ENCODE measurements at regions of chr7 and their contacts with region 1.

Region 1: GRCh38 chr7:140175221-140176121 is 1.3 kb downstream of the KDM7A start:
- DNase-seq: peak; percentile 98
- ATAC-seq: peak; percentile 68
- H3K4me3 Mint-ChIP-seq: peak overlapping the region; percentile 79
- H3K27ac Mint-ChIP-seq: peak overlapping the region; percentile 85
- H3K4me1 Mint-ChIP-seq: peaks cover 43% of the 10 kb centered on the region
- H3K27me3 Mint-ChIP-seq: peaks cover 1% of the 10 kb centered on the region
- CTCF ChIP-seq: peak; percentile 72

Region 2: DNA sequence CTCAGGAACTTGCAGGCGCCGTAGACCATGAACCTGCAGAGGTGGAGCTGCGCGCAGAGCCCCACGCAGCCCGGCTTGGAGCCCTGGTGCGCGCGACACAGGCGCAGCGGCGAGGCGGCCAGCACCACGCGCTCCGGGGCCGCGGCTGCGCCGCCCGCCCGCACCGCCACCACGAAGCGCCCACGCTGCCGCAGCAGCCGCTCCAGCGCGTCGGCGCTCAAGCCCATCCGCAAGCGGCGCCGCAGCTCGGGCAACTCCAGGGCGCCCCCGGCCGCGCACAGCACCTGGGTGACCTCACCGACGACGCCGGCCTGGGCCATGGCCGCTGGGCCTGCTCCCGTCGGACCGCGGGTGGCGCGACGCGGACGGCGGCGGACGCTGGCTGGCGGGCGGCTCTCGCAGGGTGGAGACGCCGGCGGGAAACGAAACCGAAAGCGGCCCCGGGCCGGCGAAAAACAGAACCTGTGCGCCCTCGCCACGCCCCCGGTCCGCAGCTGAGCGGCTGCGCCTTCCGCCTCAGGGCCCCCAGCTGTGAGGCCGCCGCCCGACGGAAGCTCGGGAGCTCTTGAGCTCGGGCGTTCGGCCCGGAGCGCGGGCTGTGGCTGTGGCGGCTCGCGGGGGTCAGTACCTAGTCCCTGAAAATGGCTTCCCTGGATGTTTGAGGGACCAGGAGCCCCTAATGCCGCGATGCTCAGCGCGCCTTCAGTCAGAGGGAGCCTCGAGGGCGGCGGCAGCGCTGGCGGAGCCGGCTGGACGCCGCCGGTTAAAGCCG is 112.8 kb before region 1 on chr7 and contains the start of gene PARP12:
- CTCF ChIA-PET with region 1: no interaction called
- POLR2A ChIA-PET with region 1: interaction called, 3 read pairs
- intact Hi-C with region 1: loop called (anchors 5 kb)
- DNase-seq: peak; percentile 89
- ATAC-seq: peak; percentile 81
- H3K4me3 Mint-ChIP-seq: peak within 1 kb of the TSS; percentile 83
- H3K27ac Mint-ChIP-seq: peak within 1 kb of the TSS; percentile 81
- H3K4me1 Mint-ChIP-seq: peaks cover 36% of the 10 kb centered on the region
- H3K27me3 Mint-ChIP-seq: no peaks in the 10 kb centered on the region
- CTCF ChIP-seq: no peak
- total RNA-seq, gene PARP12: 29.5 to 29.9 TPM

Region 3: GRCh38 chr7:140230861-140231770 is 55.6 kb after region 1 on chr7:
- CTCF ChIA-PET with region 1: interaction called, 10 read pairs
- POLR2A ChIA-PET with region 1: interaction called, 48 read pairs
- intact Hi-C with region 1: loop called (anchors 2 kb)
- DNase-seq: peak; percentile 87
- ATAC-seq: peak; percentile 62
- H3K4me3 Mint-ChIP-seq: peak overlapping the region; percentile 83
- H3K27ac Mint-ChIP-seq: peak overlapping the region; percentile 98
- H3K4me1 Mint-ChIP-seq: peaks cover 30% of the 10 kb centered on the region
- H3K27me3 Mint-ChIP-seq: no peaks in the 10 kb centered on the region
- CTCF ChIP-seq: no peak

Region 4: GRCh38 chr7:140304191-140304799 is 128.8 kb after region 1 on chr7:
- CTCF ChIA-PET with region 1: interaction called, 13 read pairs
- POLR2A ChIA-PET with region 1: interaction called, 4 read pairs
- intact Hi-C with region 1: loop called (anchors 2 kb)
- DNase-seq: peak; percentile 55
- ATAC-seq: peak; percentile 95
- H3K4me3 Mint-ChIP-seq: peak overlapping the region; percentile 35
- H3K27ac Mint-ChIP-seq: peak overlapping the region; percentile 92
- H3K4me1 Mint-ChIP-seq: peaks cover 9% of the 10 kb centered on the region
- H3K27me3 Mint-ChIP-seq: no peaks in the 10 kb centered on the region
- CTCF ChIP-seq: peak; percentile 62

Region 5: GRCh38 chr7:140316165-140316661 is 140.7 kb after region 1 on chr7:
- CTCF ChIA-PET with region 1: no interaction called
- POLR2A ChIA-PET with region 1: no interaction called
- intact Hi-C with region 1: loop called (anchors 5 kb)
- DNase-seq: peak; percentile 36
- ATAC-seq: peak; percentile 85
- H3K4me3 Mint-ChIP-seq: no peak overlapping the region
- H3K27ac Mint-ChIP-seq: no peak overlapping the region
- H3K4me1 Mint-ChIP-seq: peaks cover 22% of the 10 kb centered on the region
- H3K27me3 Mint-ChIP-seq: no peaks in the 10 kb centered on the region
- CTCF ChIP-seq: no peak

Region 6: DNA sequence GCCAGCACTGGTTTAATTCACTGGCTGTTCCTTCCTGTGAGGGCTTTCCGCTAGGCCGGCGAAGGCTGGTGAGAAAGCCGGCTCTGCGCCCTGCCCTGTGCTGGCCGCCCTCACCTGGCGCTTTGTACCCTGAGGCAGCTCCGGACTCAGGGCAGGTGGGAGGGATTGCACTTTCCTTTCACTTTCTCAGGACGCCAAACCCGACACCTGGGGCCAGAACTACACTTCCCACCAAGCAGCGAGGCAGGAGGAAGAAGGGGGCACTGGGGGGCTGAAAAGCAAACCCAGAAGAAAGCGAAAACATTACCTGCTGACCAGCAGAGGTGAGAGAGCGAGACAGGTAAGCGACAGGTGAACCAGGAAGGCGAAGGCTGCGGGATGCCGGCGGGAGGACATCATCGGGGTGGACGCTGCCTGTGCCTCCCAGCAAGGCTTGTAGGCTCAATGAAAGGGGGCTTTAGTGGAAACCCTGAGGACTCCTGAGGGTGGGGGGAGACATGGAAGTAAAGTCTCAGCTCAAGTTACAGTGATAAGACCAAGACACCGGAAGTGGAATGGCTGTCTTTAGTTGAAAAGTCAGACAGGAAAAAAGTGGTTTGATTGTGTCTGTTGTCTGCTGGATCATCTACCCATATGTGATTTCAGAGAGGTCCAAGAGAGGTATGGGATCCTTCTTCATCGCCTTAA is 228.6 kb after region 1 on chr7 and contains the start of gene RAB19:
- CTCF ChIA-PET with region 1: no interaction called
- POLR2A ChIA-PET with region 1: no interaction called
- intact Hi-C with region 1: loop called (anchors 5 kb)
- DNase-seq: peak; percentile 66
- ATAC-seq: peak; percentile 81
- H3K4me3 Mint-ChIP-seq: peak within 1 kb of the TSS; percentile 85
- H3K27ac Mint-ChIP-seq: peak within 1 kb of the TSS; percentile 93
- H3K4me1 Mint-ChIP-seq: peaks cover 30% of the 10 kb centered on the region
- H3K27me3 Mint-ChIP-seq: no peaks in the 10 kb centered on the region
- CTCF ChIP-seq: no peak
- total RNA-seq, gene RAB19: 5.6 to 6.4 TPM

Measured in activated CD8-positive, alpha-beta T cell treated with anti-CD3 and anti-CD28 coated beads for 36 hours (primary cell).